SK-N-SH (cell line): ENCODE measurements at regions of chr15 and their contacts with region 1.

Region 1: DNA sequence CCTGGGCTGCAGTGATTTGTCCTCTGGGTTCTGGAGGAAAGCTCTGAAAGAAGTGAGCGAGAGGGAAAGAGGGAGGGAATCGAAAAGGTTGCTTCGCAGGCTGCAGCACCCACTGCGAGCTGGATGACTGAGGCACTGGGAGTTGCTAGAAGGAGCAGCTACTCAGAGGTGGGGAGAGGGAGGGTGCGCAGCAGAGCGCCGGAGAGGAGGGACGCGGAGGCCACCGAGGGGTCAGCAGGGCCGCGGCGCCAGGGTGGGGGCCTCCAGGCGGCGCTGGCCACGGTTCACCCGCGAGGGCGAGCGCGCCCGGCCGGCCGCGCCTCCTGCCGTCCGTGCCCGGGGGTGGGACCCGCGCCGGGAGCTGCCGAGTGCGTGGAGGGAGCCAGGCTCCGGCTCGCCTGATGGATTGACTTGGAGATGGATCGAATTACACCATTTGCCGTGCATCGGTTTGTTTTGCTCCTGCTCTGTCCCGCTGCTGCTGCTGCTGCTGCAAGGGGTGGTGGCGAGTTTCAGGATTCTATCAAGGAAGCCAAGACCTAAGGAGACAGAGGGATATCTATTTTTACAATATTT is at the start of gene SEMA6D:
- DNase-seq: peak; percentile 93
- H3K4me3 ChIP-seq: peak within 1 kb of the TSS; percentile 45 to 64
- H3K27ac ChIP-seq: peak within 1 kb of the TSS in 1 of 2 experiments; percentile 11; a peak in 1 of 4 replicates
- H3K4me1 ChIP-seq: peaks cover 6 to 8% of the 10 kb centered on the region in 2 experiments; a peak in 3 of 4 replicates
- H3K27me3 ChIP-seq: peaks cover 57% of the 10 kb centered on the region
- CTCF ChIP-seq: peak; percentile 33
- EP300 ChIP-seq: no peak
- RAD21 ChIP-seq: peak; percentile 42
- polyA plus RNA-seq, gene SEMA6D: 0.30 and 0.47 TPM in 2 replicates

Region 2: DNA sequence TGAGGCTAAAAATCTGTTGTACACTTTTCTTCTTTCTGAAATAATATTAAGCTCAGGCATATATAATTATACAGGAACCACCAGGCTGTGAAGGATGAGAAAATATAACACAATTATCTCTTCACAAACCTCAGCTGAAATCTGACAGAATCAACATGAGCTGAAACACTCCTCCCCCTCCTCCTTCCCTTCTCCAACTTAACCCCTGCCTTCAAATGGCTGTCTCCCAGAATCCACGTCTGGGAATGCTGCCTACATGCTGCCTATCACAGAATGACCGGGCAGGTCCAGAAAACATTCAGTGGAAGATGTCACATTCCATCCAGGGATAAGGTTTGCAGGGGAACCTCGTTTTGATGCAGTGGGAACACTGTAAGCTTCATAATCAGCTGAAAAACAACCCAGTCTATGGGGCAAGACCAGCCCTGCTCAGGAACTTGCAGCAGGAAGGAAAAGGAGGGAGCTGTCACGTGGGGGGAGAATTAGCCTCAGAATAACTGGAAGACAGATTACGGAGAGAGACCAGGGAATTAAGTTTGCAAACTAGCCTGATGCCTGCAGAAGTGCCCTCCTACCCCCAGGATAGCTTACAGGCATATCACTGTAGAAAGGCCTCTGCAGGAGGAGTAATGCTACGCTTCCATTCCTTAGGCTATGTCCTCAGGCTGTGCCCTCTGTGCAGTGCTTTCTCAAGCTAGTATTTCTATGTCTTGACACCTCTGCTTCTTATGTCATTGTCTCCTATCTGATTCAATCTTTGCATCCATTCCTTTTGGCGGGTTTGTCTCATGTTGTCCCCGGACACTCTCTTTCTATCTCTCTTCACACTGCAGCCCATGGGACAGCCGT is 43.7 kb before region 1 on chr15:
- CTCF ChIA-PET with region 1: interaction called, 10 read pairs
- POLR2A ChIA-PET with region 1: no interaction called
- DNase-seq: peak; percentile 31
- H3K4me3 ChIP-seq: no peak overlapping the region
- H3K27ac ChIP-seq: peak overlapping the region in 1 of 2 experiments; percentile 69; a peak in 2 of 4 replicates
- H3K4me1 ChIP-seq: peaks cover 0 to 16% of the 10 kb centered on the region in 2 experiments; a peak in 2 of 4 replicates
- H3K27me3 ChIP-seq: no peaks in the 10 kb centered on the region
- CTCF ChIP-seq: no peak
- EP300 ChIP-seq: peak in 1 of 2 experiments; percentile 66; a peak in 1 of 4 replicates
- RAD21 ChIP-seq: peak; percentile 2; the same call in 1 of the 2 replicates

Region 3: GRCh38 chr15:47705281-47705997 is 11.7 kb before region 1 on chr15:
- CTCF ChIA-PET with region 1: interaction called, 10 read pairs
- POLR2A ChIA-PET with region 1: no interaction called
- DNase-seq: no peak
- H3K4me3 ChIP-seq: no peak overlapping the region
- H3K27ac ChIP-seq: no peak overlapping the region
- H3K4me1 ChIP-seq: peaks cover 0 to 7% of the 10 kb centered on the region in 2 experiments; a peak in 3 of 4 replicates
- H3K27me3 ChIP-seq: no peaks in the 10 kb centered on the region
- CTCF ChIP-seq: no peak
- EP300 ChIP-seq: no peak
- RAD21 ChIP-seq: no peak

Region 4: DNA sequence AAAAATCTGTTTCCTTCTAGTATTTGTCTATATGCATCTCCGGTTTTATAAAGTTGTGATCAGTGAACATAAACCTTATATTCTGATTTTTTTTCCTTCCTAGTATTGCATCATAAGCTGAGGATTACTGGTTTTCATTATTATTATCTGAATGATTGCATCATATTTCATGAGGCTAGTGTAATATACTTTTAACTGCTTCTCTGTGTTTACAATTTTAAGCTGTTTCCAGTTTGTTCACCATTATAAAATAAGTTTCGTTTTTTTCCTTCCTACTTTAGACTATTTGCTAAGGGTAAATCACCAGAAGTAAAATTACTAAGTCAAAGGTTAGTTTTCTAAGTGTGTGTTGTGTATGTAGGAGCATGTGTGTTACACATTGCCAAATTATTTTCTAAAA is 20.4 kb after region 1 on chr15:
- CTCF ChIA-PET with region 1: interaction called, 10 read pairs
- POLR2A ChIA-PET with region 1: no interaction called
- DNase-seq: no peak
- H3K4me3 ChIP-seq: no peak overlapping the region
- H3K27ac ChIP-seq: no peak overlapping the region
- H3K4me1 ChIP-seq: peaks cover 0 to 6% of the 10 kb centered on the region in 2 experiments; a peak in 2 of 4 replicates
- H3K27me3 ChIP-seq: no peaks in the 10 kb centered on the region
- CTCF ChIP-seq: no peak
- EP300 ChIP-seq: no peak
- RAD21 ChIP-seq: no peak

Region 5: DNA sequence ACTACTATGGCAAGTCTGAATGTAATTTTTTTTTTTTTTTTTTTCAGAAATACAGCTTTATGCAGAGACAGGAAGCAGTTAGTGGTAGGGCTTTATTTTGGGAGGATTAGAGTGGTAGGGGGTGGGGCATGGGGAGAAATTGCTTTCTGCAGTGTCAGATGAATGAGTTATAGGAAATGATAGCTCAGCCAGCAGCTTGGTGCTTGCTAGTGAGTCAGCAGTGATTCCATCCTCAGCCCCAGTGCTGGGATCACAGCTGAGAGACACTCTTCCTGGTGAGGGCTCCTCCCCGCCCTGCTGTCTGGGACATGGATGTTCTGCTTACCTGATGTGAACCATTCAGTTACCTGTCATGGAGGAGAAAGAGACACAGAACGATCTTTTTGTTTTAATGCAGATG is 39.7 kb after region 1 on chr15:
- CTCF ChIA-PET with region 1: no interaction called
- POLR2A ChIA-PET with region 1: no interaction called
- DNase-seq: no peak
- H3K4me3 ChIP-seq: no peak overlapping the region
- H3K27ac ChIP-seq: no peak overlapping the region
- H3K4me1 ChIP-seq: peaks cover 0 to 2% of the 10 kb centered on the region in 2 experiments; a peak in 2 of 4 replicates
- H3K27me3 ChIP-seq: no peaks in the 10 kb centered on the region
- CTCF ChIP-seq: no peak
- EP300 ChIP-seq: no peak
- RAD21 ChIP-seq: no peak

Region 6: DNA sequence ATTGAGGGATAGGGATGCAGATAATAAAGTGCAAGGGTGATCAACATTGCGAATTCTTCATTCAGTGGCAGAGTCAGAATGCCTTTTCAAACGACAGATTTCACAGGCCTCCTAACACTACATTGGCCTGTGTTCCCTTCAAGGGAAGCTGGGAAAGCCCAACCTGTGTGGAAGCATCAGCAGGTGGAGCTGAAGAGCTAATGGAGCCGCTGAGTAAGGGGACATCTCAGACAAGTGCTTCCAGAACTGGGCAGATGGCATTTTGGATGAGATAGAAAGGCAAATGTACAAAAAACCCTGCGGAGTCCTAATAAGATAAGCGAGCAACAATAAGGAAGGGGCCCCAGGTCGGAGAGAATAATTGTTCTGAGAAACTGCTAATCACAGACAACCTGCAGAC is 395.1 kb after region 1 on chr15:
- CTCF ChIA-PET with region 1: no interaction called
- POLR2A ChIA-PET with region 1: no interaction called
- DNase-seq: peak; percentile 36
- H3K4me3 ChIP-seq: no peak overlapping the region
- H3K27ac ChIP-seq: no peak overlapping the region
- H3K4me1 ChIP-seq: no peaks in the 10 kb centered on the region; a peak in 1 of 4 replicates
- H3K27me3 ChIP-seq: no peaks in the 10 kb centered on the region
- CTCF ChIP-seq: peak; percentile 64
- EP300 ChIP-seq: no peak
- RAD21 ChIP-seq: peak; percentile 81